ENCODE measurements at regions of chr3 and their contacts with region 1.

Region 1: DNA sequence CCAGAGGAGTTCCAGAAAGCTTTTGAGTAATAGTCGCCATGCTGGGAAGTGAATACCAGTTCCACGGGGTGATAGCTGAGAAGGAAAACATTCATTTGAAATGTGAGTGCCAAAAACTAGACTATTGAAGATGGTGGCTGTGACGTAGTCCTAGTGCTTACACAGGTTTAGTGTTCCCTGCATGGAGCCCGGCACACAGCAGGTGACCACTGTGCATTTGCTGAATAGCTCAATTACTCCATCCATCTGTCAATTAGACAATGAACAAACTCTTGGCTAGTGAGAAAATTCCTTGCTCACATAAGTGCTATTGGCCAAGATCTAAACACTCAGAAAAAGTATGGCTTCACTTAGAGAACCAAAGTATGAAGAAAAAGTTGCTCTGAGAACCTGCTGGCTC is 448.1 kb upstream of the WNT5A start:
- DNase-seq: no peak
- H3K4me3 ChIP-seq: no peak overlapping the region
- H3K27ac ChIP-seq: no peak overlapping the region
- H3K4me1 ChIP-seq: no peaks in the 10 kb centered on the region
- H3K27me3 ChIP-seq: no peaks in the 10 kb centered on the region
- CTCF ChIP-seq: no peak
- EP300 ChIP-seq: no peak
- POLR2A ChIP-seq: no peak
- RAD21 ChIP-seq: no peak

Region 2: DNA sequence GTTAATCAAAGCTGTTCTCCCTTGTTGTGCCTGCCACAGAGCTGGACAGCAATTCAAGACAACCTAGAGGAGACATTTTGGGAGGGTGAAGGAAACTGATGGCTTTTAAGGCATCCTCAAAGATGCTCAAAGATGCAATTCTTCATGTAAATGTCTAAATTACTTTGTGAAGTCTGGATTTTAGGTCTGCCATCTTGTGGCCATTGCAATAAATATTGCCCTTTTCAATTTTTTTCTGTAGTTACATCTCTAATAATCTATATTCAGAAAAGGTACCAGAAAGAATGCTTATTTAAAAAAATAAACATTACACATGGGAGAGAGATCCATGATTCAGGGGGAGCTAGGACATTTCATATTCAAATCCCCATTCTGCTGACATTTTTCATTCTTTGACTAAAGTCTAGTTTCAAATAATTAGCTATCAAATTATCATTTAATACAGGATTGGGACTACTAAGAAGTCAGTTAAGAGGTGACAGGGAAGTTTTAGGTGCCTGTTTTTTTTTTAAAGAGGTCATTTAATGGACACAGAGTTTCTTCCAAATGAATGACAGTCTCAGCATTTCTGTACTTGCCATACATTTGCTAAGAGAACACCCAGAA is 188.3 kb before region 1 on chr3:
- CTCF ChIA-PET with region 1: no interaction called
- POLR2A ChIA-PET with region 1: no interaction called
- DNase-seq: no peak
- H3K4me3 ChIP-seq: no peak overlapping the region
- H3K27ac ChIP-seq: no peak overlapping the region
- H3K4me1 ChIP-seq: no peaks in the 10 kb centered on the region
- H3K27me3 ChIP-seq: peaks cover 0 to 1% (median 0%) of the 10 kb centered on the region in 4 experiments; a peak in 1 of 7 replicates
- CTCF ChIP-seq: no peak; a peak in 1 of 4 replicates
- EP300 ChIP-seq: no peak
- POLR2A ChIP-seq: no peak
- RAD21 ChIP-seq: peak; percentile 19 to 24; a peak in 3 of 4 replicates

Region 3: GRCh38 chr3:55923207-55923606 is 12.0 kb before region 1 on chr3:
- CTCF ChIA-PET with region 1: interaction called, 14 read pairs
- POLR2A ChIA-PET with region 1: no interaction called
- DNase-seq: no peak
- H3K4me3 ChIP-seq: no peak overlapping the region
- H3K27ac ChIP-seq: no peak overlapping the region
- H3K4me1 ChIP-seq: no peaks in the 10 kb centered on the region
- H3K27me3 ChIP-seq: no peaks in the 10 kb centered on the region
- CTCF ChIP-seq: no peak
- EP300 ChIP-seq: no peak
- POLR2A ChIP-seq: no peak
- RAD21 ChIP-seq: no peak

Measured in H1 (cell line).